ENCODE measurements at regions of chr15 and their contacts with region 1.

Region 1: DNA sequence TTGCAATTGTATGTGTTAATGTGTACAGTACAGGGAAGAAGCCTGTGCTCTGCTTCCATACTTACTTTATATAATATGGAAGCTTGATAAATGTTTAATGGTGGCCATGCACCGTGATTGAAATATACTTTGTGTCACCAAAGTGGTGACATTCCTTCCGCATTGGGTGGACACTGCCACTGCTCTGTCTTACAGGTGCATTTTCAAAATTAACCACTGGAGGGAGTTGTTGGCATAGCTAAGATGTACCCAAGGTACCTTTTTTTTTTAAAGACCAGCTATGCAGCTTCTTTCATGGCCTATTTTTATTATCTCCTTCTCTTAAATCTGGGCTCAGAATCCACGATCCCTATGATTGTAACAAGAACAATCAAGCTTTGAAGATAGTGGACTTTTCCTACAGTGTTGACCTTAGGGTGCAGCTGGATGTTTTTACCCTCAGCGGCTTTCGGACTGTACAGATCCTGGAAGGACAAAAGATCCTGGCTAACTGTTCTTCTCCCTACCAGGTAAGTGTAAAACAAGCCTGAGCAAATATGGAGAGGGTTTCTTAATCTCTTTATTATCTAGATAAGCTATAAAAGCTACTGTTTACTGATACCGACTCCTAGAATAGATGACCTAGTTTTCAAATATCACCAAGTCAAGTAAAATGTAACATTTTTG is 21.6 kb upstream of the PAK6 start:
- DNase-seq: peak; percentile 60
- ATAC-seq: peak; percentile 93
- H3K4me3 ChIP-seq: no peak overlapping the region
- H3K27ac ChIP-seq: no peak overlapping the region
- H3K4me1 ChIP-seq: no peaks in the 10 kb centered on the region
- H3K27me3 ChIP-seq: no peaks in the 10 kb centered on the region
- CTCF ChIP-seq: peak; percentile 86

Region 2: DNA sequence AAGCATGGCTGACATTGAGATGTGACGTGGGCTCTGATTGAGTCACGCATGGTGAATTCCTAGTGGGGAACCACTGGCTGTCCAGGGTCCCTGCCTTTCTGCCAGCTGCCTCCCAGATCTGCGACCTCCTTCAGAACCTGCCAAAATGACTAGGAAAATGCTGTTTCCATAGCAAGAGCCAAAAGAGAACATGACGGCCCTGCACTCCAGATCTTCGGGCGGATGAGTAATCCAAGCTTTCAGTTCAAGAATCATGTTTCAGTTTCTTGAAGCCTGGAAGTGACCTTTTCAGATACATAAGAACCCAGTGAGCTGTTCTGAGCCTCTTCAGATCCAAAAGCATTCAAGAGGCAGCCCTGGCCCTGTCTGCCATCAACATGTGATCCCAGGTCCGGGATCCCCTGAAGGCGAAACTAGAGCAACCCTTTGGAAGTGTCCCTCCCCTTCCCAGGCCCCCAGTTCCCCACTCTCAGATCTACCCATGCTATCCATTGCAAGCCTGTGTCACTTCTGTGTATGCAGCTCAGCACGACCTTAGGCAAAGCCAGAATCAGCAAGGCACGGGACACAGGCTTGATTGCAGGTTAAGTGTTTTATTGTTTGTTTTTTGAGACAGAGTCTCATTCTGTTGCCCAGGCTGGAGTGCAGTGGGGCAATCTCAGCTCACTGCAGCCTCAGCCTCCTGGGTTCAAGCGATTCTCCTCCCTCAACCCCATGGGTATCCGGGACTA is 45.9 kb after region 1 on chr15:
- CTCF ChIA-PET with region 1: interaction called, 4 read pairs
- POLR2A ChIA-PET with region 1: no interaction called
- in situ Hi-C with region 1: loop called (anchors 5 kb)
- intact Hi-C with region 1: no loop called
- DNase-seq: no peak
- ATAC-seq: no peak
- H3K4me3 ChIP-seq: no peak overlapping the region
- H3K27ac ChIP-seq: no peak overlapping the region
- H3K4me1 ChIP-seq: peaks cover 33% of the 10 kb centered on the region
- H3K27me3 ChIP-seq: no peaks in the 10 kb centered on the region
- CTCF ChIP-seq: no peak

Region 3: DNA sequence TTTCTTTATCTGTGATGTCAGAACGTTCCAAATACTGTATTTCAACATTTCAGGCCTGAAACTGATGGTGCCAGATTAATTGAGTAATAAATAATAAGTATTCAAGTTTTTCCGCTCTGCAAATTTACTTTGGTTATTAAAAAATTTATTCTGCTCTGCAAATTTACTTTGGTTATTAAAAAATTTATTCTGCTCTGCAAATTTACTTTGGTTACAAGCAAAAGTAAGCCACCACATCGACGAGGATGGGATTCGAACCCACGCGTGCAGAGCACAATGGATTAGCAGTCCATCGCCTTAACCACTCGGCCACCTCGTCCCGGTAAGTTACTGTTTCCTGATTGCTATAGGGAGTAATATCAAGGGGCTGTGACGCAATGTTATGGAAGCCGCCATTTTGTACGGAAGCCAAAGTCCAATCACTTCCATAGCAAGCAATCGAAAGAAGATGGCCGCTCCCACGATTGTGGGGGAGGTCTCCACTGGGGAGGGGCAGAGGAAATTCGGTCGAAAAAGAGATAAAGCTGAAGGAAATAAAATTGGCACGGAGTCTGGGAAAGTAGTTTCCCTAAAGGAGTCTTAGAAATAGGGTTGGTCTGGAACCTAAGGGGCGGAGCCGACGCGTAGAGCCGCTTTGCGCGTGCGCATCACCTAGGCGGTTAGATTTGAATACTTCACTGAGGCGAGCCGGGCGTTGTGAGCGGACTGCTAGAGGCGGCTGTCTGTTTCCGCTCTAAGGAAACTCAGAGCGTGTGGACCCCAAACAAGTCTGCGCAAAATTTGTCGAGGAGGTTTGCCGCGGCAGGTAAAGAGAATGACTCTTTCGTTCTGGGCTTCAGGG is 376.5 kb after region 1 on chr15 and contains the start of gene KNL1:
- CTCF ChIA-PET with region 1: no interaction called
- POLR2A ChIA-PET with region 1: no interaction called
- in situ Hi-C with region 1: no loop called
- intact Hi-C with region 1: no loop called
- DNase-seq: peak; percentile 99
- ATAC-seq: peak; percentile 88
- H3K4me3 ChIP-seq: peak within 1 kb of the TSS; percentile 68 to 77
- H3K27ac ChIP-seq: peak within 1 kb of the TSS; percentile 97
- H3K4me1 ChIP-seq: peaks cover 29% of the 10 kb centered on the region
- H3K27me3 ChIP-seq: no peaks in the 10 kb centered on the region
- CTCF ChIP-seq: no peak
- total RNA-seq, gene KNL1: 28.9 TPM

Measured in Panc1 (cell line).